ENCODE measurements at regions of chr12 and their contacts with region 1.

Region 1: GRCh38 chr12:64431791-64432190 is 20.1 kb upstream of the TBK1 start:
- DNase-seq: peak; percentile 77
- ATAC-seq: peak; percentile 27; the same call in 1 of the 2 replicates
- H3K4me3 ChIP-seq: no peak overlapping the region
- H3K27ac ChIP-seq: no peak overlapping the region
- H3K4me1 ChIP-seq: no peaks in the 10 kb centered on the region
- H3K27me3 ChIP-seq: no peaks in the 10 kb centered on the region
- CTCF ChIP-seq: no peak
- POLR2A ChIP-seq: no peak
- RAD21 ChIP-seq: no peak

Region 2: DNA sequence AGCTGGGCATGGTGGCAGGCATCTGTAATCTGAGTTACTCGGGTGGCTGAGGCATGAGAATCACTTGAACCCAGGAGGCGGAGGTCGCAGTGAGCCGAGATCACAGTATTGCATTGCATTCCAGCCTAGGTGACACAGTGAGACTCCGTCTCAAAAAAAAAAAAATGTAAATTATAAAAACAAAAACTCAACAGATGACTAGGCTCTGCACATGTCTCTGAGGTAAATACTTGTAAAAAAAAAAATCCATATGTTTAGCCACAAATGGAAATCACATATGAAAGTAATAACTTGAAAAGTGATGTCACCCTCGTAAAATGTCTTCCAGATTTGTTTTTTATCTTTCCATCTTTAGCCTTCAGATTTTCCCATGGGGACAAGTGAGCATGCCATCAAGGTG is 294.7 kb before region 1 on chr12:
- CTCF ChIA-PET with region 1: no interaction called
- POLR2A ChIA-PET with region 1: no interaction called
- dilution Hi-C with region 1: no loop called
- in situ Hi-C with region 1: no loop called
- intact Hi-C with region 1: no loop called
- DNase-seq: peak; percentile 59
- ATAC-seq: peak; percentile 65
- H3K4me3 ChIP-seq: no peak overlapping the region
- H3K27ac ChIP-seq: no peak overlapping the region
- H3K4me1 ChIP-seq: no peaks in the 10 kb centered on the region
- H3K27me3 ChIP-seq: no peaks in the 10 kb centered on the region
- CTCF ChIP-seq: no peak
- POLR2A ChIP-seq: no peak
- RAD21 ChIP-seq: no peak

Region 3: GRCh38 chr12:64486657-64487056 is 54.9 kb after region 1 on chr12:
- CTCF ChIA-PET with region 1: no interaction called
- POLR2A ChIA-PET with region 1: no interaction called
- dilution Hi-C with region 1: no loop called
- in situ Hi-C with region 1: no loop called
- intact Hi-C with region 1: loop called (anchors 5 kb)
- DNase-seq: no peak
- ATAC-seq: no peak
- H3K4me3 ChIP-seq: no peak overlapping the region
- H3K27ac ChIP-seq: no peak overlapping the region
- H3K4me1 ChIP-seq: no peaks in the 10 kb centered on the region
- H3K27me3 ChIP-seq: no peaks in the 10 kb centered on the region
- CTCF ChIP-seq: no peak
- POLR2A ChIP-seq: no peak
- RAD21 ChIP-seq: no peak

Region 4: GRCh38 chr12:64494998-64495729 is 63.4 kb after region 1 on chr12:
- CTCF ChIA-PET with region 1: no interaction called
- POLR2A ChIA-PET with region 1: no interaction called
- dilution Hi-C with region 1: no loop called
- in situ Hi-C with region 1: no loop called
- intact Hi-C with region 1: loop called (anchors 5 kb)
- DNase-seq: no peak
- ATAC-seq: no peak
- H3K4me3 ChIP-seq: no peak overlapping the region
- H3K27ac ChIP-seq: no peak overlapping the region
- H3K4me1 ChIP-seq: no peaks in the 10 kb centered on the region
- H3K27me3 ChIP-seq: no peaks in the 10 kb centered on the region
- CTCF ChIP-seq: no peak
- POLR2A ChIP-seq: no peak
- RAD21 ChIP-seq: no peak

Measured in IMR-90 (cell line).